A673 (cell line): ENCODE measurements at regions of chr5 and their contacts with region 1.

Region 1: GRCh38 chr5:77518304-77518703 is 26.2 kb upstream of the WDR41 start:
- DNase-seq: peak; percentile 33
- H3K4me3 ChIP-seq: no peak overlapping the region
- H3K27ac ChIP-seq: no peak overlapping the region
- H3K4me1 ChIP-seq: no peaks in the 10 kb centered on the region
- H3K27me3 ChIP-seq: peaks cover 19% of the 10 kb centered on the region
- CTCF ChIP-seq: peak; percentile 46; the same call in 1 of the 2 replicates

Region 2: GRCh38 chr5:77463905-77464304 is 54.4 kb before region 1 on chr5:
- CTCF ChIA-PET with region 1: no interaction called
- POLR2A ChIA-PET with region 1: no interaction called
- intact Hi-C with region 1: no loop called
- DNase-seq: no peak
- H3K4me3 ChIP-seq: no peak overlapping the region
- H3K27ac ChIP-seq: no peak overlapping the region
- H3K4me1 ChIP-seq: no peaks in the 10 kb centered on the region
- H3K27me3 ChIP-seq: no peaks in the 10 kb centered on the region
- CTCF ChIP-seq: no peak

Region 3: DNA sequence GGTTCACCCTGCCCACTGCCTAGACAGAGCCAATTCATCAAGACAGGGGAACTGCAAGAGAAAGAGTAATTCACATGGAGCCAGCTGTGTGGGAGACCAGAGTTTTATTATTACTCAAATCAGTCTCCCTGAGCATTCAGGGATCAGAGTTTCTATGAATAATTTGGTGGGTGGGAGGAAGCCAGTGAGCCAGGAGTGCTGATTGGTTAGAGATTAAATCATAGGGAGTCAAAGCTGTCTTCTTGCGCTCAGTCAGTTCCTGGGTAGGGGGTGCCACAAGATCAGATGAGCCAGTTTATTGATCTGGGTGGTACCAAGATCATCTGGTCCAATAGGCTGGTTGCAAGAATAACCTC is 233.3 kb after region 1 on chr5:
- CTCF ChIA-PET with region 1: no interaction called
- POLR2A ChIA-PET with region 1: interaction called, 19 read pairs
- intact Hi-C with region 1: no loop called
- DNase-seq: peak; percentile 22
- H3K4me3 ChIP-seq: no peak overlapping the region
- H3K27ac ChIP-seq: no peak overlapping the region
- H3K4me1 ChIP-seq: peaks cover 7% of the 10 kb centered on the region
- H3K27me3 ChIP-seq: no peaks in the 10 kb centered on the region
- CTCF ChIP-seq: no peak